Head of caudate nucleus (tissue), 42 donors: ENCODE measurements at regions of chr1 and their contacts with region 1.

Region 1: DNA sequence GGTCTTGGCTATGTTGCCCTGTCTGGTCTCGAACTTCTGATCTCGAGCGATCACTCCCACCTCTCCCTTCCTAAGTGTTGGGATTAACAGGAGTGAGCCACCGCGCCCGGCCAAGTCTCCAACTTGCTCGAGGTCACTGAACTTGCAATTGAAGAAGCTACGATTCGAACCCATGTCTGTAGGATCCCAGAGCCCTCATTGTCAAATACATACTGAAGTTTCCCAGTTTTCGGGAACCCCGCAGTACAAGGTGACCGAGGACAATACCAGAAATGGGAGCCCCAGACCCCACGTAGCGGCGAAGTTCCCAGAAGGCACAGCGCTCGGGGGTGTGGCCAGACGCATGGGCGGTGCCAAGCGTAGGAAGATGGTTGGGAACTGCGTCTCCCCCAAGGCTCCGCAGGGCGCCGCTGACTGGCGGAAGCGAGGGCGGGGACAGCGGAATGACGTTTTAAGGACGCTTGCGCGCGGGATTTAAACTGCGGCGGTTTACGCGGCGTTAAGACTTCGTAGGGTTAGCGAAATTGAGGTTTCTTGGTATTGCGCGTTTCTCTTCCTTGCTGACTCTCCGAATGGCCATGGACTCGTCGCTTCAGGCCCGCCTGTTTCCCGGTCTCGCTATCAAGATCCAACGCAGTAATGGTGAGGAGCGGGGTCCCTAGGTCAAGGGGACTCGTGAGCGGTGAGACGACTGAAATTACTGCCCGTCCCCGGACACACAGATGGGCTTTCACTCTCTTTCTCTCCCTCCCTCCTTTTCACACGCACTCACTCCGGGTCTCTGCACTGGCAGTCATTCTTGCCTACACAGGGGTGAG is at the start of gene KIF2C:
- DNase-seq: peak; percentile 93 to 99 (median 97)

Region 2: DNA sequence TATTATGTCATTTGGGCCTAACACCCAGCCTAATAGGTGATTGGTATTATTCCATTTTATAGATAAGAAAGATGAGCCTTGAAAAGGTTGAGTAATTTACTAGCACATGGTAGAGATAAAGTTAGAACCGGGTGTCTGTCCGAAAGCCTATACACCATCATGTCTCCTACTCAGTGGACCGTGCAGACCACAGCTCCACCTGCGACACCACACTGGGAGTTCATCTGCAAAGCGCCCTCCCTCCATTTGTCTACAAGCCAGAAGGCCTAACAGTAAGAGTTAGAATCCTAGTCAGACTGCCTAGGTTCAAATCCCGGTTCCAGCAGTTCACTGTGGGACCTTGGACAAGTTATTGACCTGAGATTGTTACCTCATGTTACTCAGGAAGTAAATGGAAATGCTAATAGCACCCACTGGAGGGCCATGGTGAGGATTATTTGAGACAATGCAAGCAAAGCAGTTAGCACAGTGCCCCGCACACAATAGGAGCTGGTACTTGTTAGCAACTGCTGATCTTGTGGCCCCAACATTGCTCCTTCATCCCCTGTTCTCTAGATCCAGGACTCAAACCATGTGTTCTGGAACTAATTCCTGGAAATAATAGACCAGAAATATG is 44.6 kb before region 1 on chr1:
- intact Hi-C with region 1: no loop called
- DNase-seq: no peak

Region 3: DNA sequence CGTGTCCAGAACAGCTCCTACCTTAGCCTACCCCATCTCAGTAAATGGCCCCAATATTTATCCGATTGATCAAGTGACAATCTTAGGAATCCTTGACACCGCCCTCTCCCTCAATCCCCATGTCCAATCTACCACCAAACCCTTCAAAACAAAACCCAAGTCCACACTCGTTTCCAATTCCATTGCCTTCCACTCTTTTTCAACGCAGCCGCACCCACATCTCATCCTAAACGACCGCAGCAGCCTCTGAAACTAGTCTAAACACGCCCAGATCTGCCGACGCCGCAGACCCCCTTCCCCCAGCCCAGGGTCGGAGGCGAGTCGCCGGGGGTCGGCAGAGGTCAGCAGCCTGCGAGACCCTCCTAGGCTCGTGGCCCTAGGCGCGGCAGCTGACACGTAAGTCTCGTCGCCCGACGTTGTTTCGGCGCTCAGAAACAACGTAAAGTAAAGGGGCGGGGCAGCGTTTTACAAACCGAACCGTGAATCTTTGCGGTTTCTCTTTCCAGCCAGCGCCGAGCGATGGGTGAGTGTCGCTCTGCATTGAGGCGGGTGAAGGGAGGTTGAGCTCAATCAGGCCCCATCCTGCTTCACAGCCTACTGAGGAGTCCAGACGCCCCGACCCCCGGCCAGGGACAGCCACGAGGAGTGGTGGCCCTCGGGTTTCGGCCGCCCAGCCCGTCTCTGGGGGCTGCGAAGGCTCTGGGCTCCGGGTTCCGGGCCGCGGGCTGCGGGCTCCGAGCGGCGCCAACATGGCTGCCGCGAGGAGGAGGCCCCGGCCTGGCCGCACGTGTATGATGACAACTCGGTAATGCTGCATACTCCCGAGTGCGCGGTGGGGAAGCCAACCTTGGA is 35.7 kb after region 1 on chr1 and contains the start of gene RPS8:
- intact Hi-C with region 1: loop called (anchors 5 kb)
- DNase-seq: peak; percentile 85 to 96 (median 92)

Region 4: DNA sequence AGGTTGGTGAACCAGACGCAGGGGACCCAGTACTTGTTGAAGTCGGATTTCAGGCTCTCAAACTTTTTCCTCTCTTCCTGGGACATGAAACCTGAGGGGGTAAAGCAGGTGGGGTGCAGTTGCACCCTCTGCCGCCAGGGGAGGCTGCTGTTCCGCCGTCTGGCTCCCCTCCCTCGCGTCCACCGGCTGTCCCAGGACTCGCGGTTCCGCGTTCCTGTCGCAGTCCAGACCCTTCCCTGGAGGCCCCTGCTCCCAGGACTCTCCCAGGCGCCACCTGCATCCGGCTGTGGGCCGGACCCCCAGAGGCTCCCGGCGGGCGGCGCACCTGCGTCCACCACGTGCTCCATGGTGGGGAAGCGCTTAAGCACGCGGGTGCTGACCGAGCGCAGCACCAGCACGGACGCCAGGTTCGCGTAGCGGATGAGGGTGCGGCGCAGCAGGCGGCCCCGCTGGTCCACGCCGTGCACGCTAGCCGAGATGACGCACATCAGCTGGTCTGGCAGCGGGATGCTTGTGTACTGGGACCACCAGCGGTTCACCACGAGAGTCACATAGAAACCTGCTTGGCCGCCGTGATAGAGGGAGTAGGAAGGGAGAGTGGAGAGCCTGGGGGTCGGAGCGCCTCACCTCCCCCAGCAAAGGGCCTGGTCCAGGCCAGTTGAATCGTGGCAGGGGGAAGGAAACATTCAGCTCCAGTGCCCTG is 46.7 kb after region 1 on chr1:
- intact Hi-C with region 1: no loop called
- DNase-seq: peak in 26 of 42 donors; percentile 34 to 80 (median 58)